ENCODE measurements at regions of chr12 and their contacts with region 1.

Region 1: DNA sequence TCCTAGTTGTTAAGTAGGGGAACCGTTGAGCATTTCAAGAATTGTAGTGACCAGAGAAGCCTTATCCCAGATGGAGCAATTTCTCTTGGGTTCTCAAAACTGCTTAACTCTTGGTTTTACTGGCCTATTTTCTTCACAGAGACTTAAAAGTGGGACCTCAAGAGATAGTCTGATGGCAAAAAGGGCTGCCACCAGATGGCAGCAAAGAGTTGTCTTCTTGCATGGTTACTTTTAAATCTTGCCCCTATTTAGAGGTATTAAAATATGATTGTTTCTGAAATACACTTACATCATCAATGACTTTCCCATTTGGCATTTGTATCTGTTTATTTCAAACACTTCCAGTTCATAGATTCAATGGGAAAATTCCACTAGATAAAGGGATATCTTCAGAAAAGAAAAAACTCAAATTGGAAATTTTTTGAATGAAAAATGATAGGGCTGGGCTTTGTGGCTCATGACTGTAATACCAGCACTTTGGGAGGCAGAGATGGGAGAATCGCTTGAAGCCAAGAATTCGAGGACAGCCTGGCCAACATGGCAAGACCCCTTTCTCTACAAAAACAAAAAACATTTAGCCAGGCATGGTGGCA is 69.9 kb upstream of the CNTN1 start:
- DNase-seq: no peak
- H3K4me3 ChIP-seq: no peak overlapping the region
- H3K27ac ChIP-seq: no peak overlapping the region
- H3K4me1 ChIP-seq: no peaks in the 10 kb centered on the region
- H3K27me3 ChIP-seq: peaks cover 8% of the 10 kb centered on the region
- CTCF ChIP-seq: peak; percentile 67

Region 2: GRCh38 chr12:40921563-40922163 is 299.3 kb after region 1 on chr12:
- intact Hi-C with region 1: loop called (anchors 10 kb)
- DNase-seq: no peak
- H3K4me3 ChIP-seq: no peak overlapping the region
- H3K27ac ChIP-seq: no peak overlapping the region
- H3K4me1 ChIP-seq: no peaks in the 10 kb centered on the region
- H3K27me3 ChIP-seq: peaks cover 10% of the 10 kb centered on the region
- CTCF ChIP-seq: peak; percentile 68